ENCODE measurements at regions of chr5 and their contacts with region 1.

Region 1: DNA sequence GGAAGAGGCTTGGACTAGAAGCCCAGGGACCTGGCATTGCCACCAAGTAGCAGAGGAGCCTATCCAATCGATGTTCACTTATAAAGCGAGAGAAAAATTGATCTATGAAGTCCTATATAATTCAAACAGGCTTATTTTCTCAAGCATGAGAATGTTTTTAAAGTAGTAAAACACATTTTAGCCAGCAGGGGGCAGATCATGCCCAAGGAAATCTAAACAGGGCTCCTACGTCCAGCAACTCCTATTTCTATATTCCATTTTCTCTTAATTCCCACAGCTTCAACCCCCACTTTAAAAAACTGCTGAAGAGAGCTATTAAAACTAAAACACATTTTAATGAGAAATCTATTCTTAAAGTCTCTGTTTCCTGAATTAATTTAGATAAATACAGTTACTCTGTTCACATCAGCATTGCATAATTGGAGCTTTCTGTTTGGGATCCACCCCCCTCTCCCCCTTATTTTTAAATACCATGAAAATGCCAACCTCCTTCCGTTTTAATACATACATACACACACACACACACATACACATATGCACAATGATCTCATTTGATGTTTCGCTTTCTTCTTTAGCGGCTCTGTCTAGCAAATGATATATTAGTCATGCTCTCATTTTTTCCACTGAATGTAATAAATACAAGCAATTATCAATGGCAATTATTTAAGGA is 144.9 kb downstream of the MYO10 start:
- DNase-seq: no peak
- H3K4me3 ChIP-seq: no peak overlapping the region
- H3K27ac ChIP-seq: no peak overlapping the region
- H3K27me3 ChIP-seq: no peaks in the 10 kb centered on the region
- CTCF ChIP-seq: peak; percentile 62

Region 2: GRCh38 chr5:16776611-16777251 is 14.4 kb before region 1 on chr5:
- CTCF ChIA-PET with region 1: interaction called, 11 read pairs
- POLR2A ChIA-PET with region 1: no interaction called
- DNase-seq: no peak
- H3K4me3 ChIP-seq: no peak overlapping the region
- H3K27ac ChIP-seq: no peak overlapping the region
- H3K27me3 ChIP-seq: no peaks in the 10 kb centered on the region
- CTCF ChIP-seq: no peak

Region 3: DNA sequence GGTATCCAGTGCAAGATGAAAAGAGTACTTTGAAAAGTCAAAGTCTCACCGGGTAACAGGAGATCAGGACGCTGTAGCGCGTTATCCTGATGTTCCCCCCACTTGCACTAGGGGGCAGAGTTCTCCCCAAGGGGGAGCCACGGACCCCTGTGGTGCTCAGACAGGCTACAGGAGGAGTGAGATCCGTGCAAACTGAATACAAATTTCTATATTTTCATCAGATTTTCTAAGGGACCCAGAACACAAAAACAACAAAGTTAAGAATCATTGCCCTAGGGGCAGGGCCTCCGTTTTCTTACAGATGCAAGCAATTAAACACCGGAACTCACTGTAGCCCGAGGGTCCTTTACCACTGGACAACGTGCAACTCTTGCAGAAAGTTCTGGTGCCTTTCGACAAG is 143.0 kb after region 1 on chr5:
- CTCF ChIA-PET with region 1: interaction called, 15 read pairs
- POLR2A ChIA-PET with region 1: interaction called, 3 read pairs
- DNase-seq: peak; percentile 38
- H3K4me3 ChIP-seq: peak overlapping the region; percentile 85
- H3K27ac ChIP-seq: no peak overlapping the region
- H3K27me3 ChIP-seq: no peaks in the 10 kb centered on the region
- CTCF ChIP-seq: peak; percentile 99

Region 4: GRCh38 chr5:17248999-17249634 is 457.9 kb after region 1 on chr5:
- CTCF ChIA-PET with region 1: no interaction called
- POLR2A ChIA-PET with region 1: no interaction called
- DNase-seq: peak; percentile 94
- H3K4me3 ChIP-seq: no peak overlapping the region
- H3K27ac ChIP-seq: peak overlapping the region; percentile 34
- H3K27me3 ChIP-seq: no peaks in the 10 kb centered on the region
- CTCF ChIP-seq: no peak; the same call in 1 of the 2 replicates

Measured in AG04450 (cell line).